Right ventricle myocardium inferior (tissue), 1 donor: ENCODE measurements at regions of chr15 and their contacts with region 1.

Region 1: DNA sequence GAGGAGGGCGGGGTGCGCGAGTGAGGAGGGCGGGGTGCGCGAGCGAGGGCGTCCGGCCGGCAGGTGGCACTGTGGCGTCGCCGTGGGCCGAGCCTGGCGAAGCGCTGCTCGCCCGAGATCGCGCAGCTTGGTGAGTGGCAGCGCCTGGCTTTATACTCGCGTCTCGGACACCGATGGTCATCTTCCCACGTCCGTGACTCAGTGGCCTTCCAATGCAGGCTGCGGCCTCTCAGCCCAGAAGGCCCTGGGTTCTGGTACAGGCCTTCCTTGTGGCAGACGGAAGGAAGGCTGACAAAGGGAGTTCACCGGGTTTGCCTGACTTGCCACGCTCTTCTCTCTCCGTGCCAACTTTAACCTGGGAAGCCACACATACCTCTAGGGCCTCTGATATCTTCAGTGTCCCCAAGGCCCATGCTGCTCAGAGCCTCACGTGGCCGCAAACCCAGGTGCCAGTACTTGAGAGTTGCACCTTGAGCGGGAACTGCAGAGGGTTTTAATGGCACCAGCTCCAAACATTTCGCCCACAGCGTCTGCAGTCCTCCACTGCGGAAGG is 195.3 kb upstream of the LYSMD4 start:
- DNase-seq: peak; percentile 92
- ATAC-seq: peak; percentile 90

Region 2: DNA sequence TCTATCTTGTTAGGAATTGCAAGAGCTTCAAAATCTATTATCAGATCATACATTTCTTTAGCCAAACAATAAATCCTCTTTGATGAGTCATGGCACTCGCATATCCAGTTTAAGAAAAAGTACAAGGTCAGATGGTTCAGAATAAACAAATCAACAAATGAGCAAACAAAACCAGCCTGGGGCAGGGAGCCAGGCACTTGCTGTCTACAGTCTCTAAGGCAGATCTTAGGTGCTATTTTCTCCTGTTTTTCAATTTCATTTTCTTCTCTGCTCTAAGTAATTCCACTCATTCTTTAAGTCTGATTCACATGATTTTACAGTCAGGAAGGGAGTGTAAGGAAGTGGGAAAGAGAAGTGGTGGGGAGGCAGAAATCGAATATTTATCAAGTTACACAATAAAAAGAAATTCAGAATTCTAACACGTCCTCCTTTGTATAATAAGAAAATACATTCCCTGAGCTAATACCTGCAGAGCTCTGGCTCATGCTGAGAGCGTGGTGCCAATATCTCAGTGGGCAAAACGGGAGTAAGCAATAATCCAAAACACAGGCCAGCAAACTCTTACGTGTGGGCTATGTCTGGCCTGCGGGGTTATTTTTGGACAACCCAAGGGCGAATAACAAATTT is 114.6 kb after region 1 on chr15:
- intact Hi-C with region 1: no loop called
- DNase-seq: no peak
- ATAC-seq: peak; percentile 63

Region 3: DNA sequence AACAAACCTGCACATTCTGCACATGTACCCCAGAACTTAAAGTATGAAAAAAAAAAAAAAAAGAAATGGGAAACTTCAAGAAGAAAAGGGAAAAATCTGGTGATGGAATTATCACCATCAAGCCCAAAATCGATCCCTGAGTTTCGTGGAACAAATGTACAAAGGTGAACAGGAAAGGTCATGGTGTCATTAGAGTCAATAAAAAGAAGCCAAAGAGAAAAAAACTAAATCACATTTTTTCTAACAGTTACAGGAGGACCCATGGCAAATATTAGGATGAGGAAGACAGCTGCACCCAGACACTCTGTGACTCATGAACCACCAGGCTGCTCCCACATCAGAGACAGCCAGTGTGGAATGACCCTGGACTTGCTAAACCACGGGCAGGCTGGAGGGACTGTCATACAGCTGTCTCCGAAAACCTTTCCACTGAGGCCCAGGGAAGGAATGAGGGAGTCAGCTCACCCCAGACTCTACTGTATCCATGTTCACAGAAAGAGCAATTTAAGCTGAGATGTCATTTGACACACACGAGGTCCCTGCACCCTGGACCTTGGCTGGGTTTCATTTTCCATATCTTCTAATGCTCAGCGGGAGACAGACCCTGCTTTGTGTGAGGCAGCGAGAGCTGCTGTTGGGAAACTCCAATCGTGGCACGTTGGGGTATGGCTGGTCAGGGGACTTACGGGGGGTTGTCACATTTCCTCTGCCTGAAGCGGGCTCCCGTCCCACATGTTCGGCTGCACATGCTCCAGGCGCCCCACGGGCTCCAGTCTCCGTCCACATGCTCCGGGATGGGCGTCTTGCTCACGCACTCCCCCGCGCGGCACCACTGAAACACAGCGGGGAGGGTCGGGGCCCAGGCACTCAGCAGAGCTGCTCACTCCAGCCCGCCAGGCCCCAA is 203.1 kb after region 1 on chr15:
- intact Hi-C with region 1: loop called (anchors 2 kb)
- DNase-seq: peak; percentile 79
- ATAC-seq: peak; percentile 92

Region 4: DNA sequence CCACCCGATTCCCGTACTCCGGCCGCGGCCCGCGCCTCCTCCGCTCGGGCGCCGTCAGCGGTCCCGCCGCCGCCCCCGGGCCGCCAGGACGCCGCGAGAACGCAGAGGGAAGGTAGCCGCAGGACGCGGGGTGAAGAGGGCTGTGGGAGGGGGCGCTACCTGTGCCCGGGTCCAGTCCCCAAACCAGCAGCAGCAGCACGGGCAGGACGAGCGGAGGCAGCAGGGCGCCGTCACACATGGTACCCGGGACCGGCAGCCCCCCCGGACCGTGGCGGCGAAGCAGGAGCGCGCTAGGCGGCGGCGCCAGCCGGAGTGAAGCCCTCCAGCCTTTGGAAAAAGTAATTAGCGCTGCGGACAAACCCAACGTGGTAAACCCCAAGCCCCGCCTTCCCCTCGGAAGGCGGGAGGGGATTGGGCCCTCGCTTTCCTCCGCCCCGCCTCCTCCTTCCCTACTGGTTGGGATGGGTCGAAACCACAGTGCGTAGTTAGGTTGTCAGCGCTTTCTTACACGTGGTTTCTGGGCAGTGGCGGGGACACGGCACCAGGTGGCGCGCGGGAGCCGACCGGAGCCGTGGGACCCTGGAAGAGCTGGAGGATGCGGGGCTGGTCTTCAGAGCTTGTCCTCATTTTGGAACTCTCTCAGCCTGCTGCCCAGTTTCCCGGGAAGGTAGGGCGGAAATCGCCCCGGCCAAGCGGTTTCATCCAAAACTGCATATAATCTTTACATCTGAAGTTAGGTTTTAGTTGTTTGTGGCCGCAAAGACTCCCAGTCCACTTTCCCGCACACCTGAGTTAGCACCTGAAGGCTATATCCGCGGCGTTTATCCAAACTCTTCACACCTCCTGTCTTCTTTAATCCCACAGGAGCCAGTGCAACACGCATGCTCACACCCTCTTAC is 413.4 kb after region 1 on chr15 and contains the start of gene ADAMTS17:
- intact Hi-C with region 1: loop called (anchors 2 kb)
- DNase-seq: peak; percentile 96
- ATAC-seq: peak; percentile 99
- total RNA-seq, gene ADAMTS17: 1.4 TPM

Region 5: GRCh38 chr15:100572362-100572983 is 644.0 kb after region 1 on chr15:
- intact Hi-C with region 1: loop called (anchors 10 kb)
- DNase-seq: no peak
- ATAC-seq: no peak

Region 6: DNA sequence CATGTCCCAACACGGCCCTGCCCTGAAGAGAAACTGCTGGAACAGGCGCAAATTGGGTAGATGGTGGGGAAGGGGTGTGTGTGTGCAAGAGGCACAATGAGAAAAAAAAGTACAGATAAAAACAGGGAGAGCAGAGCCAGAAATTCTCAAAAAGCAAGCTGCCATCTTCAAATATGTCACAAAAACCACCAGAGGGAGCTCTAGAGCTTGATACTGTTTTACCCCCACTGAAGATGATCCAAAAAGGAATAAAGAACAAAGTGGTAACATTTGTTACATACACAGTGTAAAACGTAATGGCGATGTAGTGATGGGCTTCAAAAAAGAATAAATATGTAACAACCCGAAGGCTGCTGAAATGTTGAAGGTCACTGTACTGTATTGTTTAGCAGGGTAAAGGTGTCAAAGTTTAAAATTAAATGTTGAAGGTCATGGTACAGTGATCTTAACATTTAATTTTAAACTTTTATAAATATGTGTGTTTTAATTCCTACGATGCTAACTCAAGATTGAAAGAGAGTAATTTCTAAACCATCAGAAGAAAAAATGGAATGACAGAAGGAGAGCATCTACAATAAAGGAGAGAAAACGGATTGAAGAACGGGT is 1360.5 kb after region 1 on chr15:
- intact Hi-C with region 1: no loop called
- DNase-seq: no peak
- ATAC-seq: no peak